ENCODE measurements at regions of chrX and their contacts with region 1.

Region 1: GRCh38 chrX:19514791-19515614 is at the start of gene MAP3K15:
- DNase-seq: peak; percentile 30 to 63 (median 42)
- ATAC-seq: peak; percentile 59
- H3K4me3 ChIP-seq: no peak within 1 kb of the TSS
- H3K27ac ChIP-seq: no peak within 1 kb of the TSS
- H3K4me1 ChIP-seq: peaks cover 3% of the 10 kb centered on the region
- H3K27me3 ChIP-seq: peaks cover 0 to 5% of the 10 kb centered on the region in 2 donors
- CTCF ChIP-seq: peak in 1 of 7 experiments; percentile 30
- POLR2A ChIP-seq: no peak
- total RNA-seq, gene MAP3K15: 0.26 to 0.33 TPM

Region 2: GRCh38 chrX:19377799-19378198 is 137.2 kb before region 1 on chrX:
- intact Hi-C with region 1: loop called (anchors 5 kb)
- DNase-seq: no peak
- ATAC-seq: no peak
- H3K4me3 ChIP-seq: no peak overlapping the region
- H3K27ac ChIP-seq: no peak overlapping the region
- H3K4me1 ChIP-seq: peaks cover 4% of the 10 kb centered on the region
- H3K27me3 ChIP-seq: no peaks in the 10 kb centered on the region
- CTCF ChIP-seq: no peak
- POLR2A ChIP-seq: no peak